ENCODE measurements at regions of chr2 and their contacts with region 1.

Region 1: DNA sequence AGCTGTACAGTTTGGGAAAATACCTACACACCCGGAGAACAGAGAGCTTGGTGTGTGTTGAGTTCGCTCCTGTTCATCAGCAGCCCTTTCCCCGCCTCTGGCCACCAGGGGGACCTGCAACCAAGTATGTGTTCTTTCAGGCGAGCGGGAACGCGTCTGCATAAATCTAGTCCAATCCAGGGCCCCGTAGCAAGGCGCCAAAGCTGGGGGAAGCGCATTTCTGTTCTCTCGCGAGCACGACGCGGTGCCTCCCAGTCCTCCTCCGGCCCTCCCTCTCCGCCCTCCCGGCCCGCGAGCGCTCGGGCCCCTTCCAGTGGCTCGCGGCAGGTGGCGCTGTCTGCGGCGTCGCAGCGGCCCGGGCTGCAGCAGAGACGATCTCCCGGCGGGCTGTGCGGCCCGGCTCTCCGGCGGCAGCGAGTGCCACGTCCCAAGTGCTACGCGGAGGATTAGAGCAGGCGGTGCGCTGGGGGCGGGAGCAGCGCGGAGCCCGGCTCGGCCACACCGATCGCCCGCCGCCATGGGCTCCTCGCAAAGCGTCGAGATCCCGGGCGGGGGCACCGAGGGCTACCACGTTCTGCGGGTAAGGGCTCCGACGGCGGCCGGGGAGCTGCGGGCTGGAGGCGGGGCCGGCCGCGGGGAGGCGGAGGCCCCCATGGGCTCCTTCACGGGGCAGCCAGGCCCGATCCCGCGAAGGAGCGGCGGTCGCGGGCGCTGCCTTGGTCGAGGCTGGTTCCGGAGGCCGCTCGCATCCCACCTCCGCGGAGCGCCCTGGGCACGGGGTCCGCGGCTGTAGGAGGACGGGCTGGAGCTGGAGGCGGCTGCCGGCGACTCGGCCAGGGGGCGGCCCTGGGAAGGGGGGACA is at the start of gene GORASP2:
- DNase-seq: peak; percentile 97
- H3K4me3 Mint-ChIP-seq: peak within 1 kb of the TSS; percentile 92
- H3K27ac Mint-ChIP-seq: peak within 1 kb of the TSS; percentile 92
- H3K4me1 Mint-ChIP-seq: peaks cover 45% of the 10 kb centered on the region
- H3K27me3 Mint-ChIP-seq: peaks cover 2% of the 10 kb centered on the region
- total RNA-seq, gene GORASP2: 99.5 and 104 TPM in 2 replicates

Region 2: DNA sequence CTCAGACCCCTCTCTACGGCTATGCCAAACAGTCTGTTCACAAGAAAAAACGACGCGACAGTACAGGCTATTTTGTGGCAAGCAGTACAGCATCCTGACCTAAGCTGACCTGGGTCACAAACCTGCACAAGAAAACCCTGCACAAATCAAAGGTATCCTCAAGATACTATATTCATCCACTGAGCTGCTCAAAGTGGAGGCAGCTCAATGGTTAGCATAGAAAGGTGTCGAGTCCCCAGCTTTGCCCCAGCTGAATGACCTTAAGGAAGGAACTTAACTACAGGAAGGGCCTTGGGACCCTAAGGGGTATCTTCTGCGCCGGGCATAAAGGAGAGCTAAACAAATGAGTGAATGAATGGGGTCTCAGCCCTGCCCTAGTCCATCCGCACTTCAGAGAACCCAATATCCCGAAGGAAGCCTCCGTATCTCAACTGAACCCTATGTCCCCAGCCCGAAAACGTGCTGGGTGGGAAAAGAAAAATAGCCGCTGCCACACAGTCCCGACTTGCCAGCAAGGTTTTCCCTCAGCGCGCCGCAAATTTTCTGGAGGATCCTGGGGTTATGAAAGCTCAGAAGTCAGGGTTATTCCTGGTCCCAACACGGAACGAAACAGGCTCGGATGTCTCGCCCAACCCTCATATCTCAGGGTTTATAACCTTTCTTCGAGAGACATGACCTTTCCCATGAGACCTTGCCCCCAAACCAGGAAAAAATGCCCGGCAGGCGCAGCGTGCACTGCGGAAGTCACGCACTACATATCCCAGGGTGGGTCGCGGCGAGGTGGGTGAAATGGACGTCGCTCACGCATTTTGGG is 1355.7 kb before region 1 on chr2 and contains the start of gene FASTKD1:
- intact Hi-C with region 1: loop called (anchors 10 kb)
- DNase-seq: peak; percentile 82
- H3K4me3 Mint-ChIP-seq: peak within 1 kb of the TSS; percentile 99
- H3K27ac Mint-ChIP-seq: peak within 1 kb of the TSS; percentile 90
- H3K4me1 Mint-ChIP-seq: peaks cover 32% of the 10 kb centered on the region
- H3K27me3 Mint-ChIP-seq: no peaks in the 10 kb centered on the region
- total RNA-seq, gene FASTKD1: 50.3 and 50.4 TPM in 2 replicates

Region 3: DNA sequence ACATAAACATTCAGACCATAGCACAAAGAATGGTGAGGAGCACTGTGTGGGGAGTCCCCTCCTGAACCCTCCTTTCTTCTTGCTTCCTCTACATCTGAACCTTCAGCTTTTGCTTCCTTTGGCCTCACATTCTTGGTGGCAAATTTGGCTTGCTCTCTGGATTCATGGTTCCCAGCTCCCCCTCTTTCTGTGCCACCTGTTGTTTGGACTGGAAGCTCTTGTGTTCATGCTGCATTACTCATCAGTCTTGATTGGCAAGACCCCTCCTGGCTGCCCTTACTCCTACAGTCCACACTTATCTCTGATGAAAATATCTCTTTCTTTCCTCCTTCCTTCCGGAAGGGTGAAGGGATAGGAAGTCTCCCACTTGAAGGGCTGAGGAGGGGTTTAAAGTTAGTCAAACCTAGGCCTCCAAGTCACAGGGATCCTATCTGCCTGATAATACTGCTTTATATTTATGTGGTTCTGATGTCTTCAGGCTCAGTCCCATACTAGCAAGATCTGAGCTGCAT is 681.1 kb before region 1 on chr2:
- intact Hi-C with region 1: no loop called
- DNase-seq: no peak
- H3K4me3 Mint-ChIP-seq: no peak overlapping the region
- H3K27ac Mint-ChIP-seq: no peak overlapping the region
- H3K4me1 Mint-ChIP-seq: no peaks in the 10 kb centered on the region
- H3K27me3 Mint-ChIP-seq: peaks cover 26% of the 10 kb centered on the region

Region 4: GRCh38 chr2:170361090-170361936 is 567.7 kb before region 1 on chr2:
- intact Hi-C with region 1: loop called (anchors 2 kb)
- DNase-seq: peak; percentile 39
- H3K4me3 Mint-ChIP-seq: no peak overlapping the region
- H3K27ac Mint-ChIP-seq: peak overlapping the region; percentile 94
- H3K4me1 Mint-ChIP-seq: peaks cover 33% of the 10 kb centered on the region
- H3K27me3 Mint-ChIP-seq: peaks cover 2% of the 10 kb centered on the region

Region 5: DNA sequence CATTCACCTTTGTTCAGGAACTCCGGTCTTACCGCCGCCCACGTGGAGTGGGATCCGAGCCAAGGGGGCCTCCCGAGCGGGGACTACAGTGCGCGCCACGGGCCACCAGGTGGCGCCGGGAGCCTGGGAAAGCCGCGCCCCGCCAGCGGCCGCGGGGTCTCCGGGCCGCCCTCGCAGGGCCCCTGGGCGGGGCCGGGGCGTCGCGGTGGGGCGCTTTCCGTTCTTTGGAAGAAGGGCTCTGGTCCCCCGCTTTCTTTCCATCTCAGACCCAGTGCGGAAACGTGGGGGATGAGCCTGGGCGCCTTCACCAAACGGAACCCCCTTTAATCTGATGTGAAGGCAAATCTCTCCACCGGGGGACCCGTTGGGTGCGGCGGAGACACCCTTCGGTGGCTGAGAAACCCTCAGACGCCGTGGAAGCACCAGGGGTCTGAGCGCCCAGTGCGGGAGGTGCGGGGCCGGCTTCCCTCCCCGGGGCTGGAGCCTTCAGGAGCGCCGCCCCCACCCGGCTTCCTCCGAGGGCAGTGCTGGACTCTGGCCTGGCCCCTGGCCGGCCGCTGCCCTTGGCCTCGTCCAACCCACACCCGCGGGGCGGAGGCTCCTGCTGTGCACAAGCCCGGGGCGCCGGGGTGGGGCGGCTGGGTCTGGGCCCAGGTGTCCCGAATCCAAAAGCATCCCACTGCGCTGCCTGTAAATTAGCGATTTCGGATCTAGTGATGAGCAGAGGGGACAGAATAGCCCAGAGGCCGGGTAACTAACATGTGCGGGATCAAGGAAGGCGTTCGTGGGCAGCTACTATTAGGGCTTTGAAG is 44.6 kb after region 1 on chr2:
- intact Hi-C with region 1: loop called (anchors 1 kb)
- DNase-seq: peak; percentile 77
- H3K4me3 Mint-ChIP-seq: peak overlapping the region; percentile 73
- H3K27ac Mint-ChIP-seq: no peak overlapping the region
- H3K4me1 Mint-ChIP-seq: peaks cover 16% of the 10 kb centered on the region
- H3K27me3 Mint-ChIP-seq: no peaks in the 10 kb centered on the region

Region 6: GRCh38 chr2:171416009-171416926 is 487.2 kb after region 1 on chr2:
- intact Hi-C with region 1: loop called (anchors 1 kb)
- DNase-seq: peak; percentile 65
- H3K4me3 Mint-ChIP-seq: no peak overlapping the region
- H3K27ac Mint-ChIP-seq: peak overlapping the region; percentile 78
- H3K4me1 Mint-ChIP-seq: peaks cover 33% of the 10 kb centered on the region
- H3K27me3 Mint-ChIP-seq: no peaks in the 10 kb centered on the region

Region 7: GRCh38 chr2:171460537-171460936 is 531.5 kb after region 1 on chr2:
- intact Hi-C with region 1: no loop called
- DNase-seq: no peak
- H3K4me3 Mint-ChIP-seq: no peak overlapping the region
- H3K27ac Mint-ChIP-seq: no peak overlapping the region
- H3K4me1 Mint-ChIP-seq: no peaks in the 10 kb centered on the region
- H3K27me3 Mint-ChIP-seq: no peaks in the 10 kb centered on the region

Region 8: GRCh38 chr2:171687287-171688128 is 758.5 kb after region 1 on chr2 and contains the start of gene DYNC1I2:
- intact Hi-C with region 1: loop called (anchors 1 kb)
- DNase-seq: peak; percentile 63
- H3K4me3 Mint-ChIP-seq: peak within 1 kb of the TSS; percentile 85
- H3K27ac Mint-ChIP-seq: peak within 1 kb of the TSS; percentile 84
- H3K4me1 Mint-ChIP-seq: peaks cover 20% of the 10 kb centered on the region
- H3K27me3 Mint-ChIP-seq: peaks cover 10% of the 10 kb centered on the region
- total RNA-seq, gene DYNC1I2: 49.3 and 49.4 TPM in 2 replicates

Region 9: DNA sequence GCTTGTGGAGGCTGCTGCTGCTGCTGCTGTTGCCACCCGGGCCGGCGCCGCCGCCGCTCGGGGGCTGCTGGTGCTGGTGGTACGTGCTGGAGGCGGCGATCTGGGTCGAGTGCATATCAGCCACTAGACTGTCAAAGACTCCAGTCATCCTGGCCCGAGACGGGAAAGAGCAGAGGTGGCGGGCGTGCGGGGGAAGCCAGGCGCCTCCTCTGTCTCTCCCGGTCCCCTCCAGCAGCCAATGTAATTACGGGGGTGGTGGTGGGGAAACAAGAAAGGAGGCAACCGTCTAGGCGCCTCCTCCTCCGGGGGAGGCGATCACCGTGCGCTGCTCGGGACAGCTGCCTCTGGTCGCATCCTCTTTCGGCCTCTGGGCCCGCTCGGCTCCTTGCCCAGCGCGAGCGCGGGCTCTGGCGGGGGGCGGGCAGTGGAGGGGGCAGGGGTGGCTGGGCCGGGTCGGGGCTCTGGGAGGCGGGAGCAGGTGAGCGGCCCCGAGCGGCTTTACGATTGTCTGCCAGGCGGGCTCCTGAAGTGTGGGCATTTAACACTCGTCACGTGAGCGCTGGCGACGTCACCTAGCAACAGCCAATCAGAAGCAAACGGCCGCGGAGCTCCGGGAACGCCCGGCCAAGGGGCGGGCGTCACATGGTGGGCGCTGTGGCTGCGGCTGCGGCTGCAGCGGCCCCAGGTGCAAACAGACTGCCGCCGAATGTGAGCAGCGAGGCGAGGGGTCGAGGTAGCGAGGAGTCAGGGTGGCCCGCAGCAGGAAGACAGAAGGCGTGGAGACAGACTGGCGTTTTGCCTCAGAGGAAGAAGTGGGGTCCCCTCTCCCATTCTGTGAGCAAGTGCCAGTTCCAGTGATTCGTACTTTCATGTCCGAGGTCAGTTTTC is 1173.6 kb after region 1 on chr2 and contains the start of gene DLX2:
- intact Hi-C with region 1: loop called (anchors 5 kb)
- DNase-seq: peak; percentile 44
- H3K4me3 Mint-ChIP-seq: peak within 1 kb of the TSS; percentile 71
- H3K27ac Mint-ChIP-seq: peak within 1 kb of the TSS; percentile 82
- H3K4me1 Mint-ChIP-seq: peaks cover 52% of the 10 kb centered on the region
- H3K27me3 Mint-ChIP-seq: peaks cover 73% of the 10 kb centered on the region
- total RNA-seq, gene DLX2: 0.20 TPM in 1 of 2 replicates, not detected in the other